Mammary epithelial cell (primary cell): ENCODE measurements at regions of chr4 and their contacts with region 1.

Region 1: DNA sequence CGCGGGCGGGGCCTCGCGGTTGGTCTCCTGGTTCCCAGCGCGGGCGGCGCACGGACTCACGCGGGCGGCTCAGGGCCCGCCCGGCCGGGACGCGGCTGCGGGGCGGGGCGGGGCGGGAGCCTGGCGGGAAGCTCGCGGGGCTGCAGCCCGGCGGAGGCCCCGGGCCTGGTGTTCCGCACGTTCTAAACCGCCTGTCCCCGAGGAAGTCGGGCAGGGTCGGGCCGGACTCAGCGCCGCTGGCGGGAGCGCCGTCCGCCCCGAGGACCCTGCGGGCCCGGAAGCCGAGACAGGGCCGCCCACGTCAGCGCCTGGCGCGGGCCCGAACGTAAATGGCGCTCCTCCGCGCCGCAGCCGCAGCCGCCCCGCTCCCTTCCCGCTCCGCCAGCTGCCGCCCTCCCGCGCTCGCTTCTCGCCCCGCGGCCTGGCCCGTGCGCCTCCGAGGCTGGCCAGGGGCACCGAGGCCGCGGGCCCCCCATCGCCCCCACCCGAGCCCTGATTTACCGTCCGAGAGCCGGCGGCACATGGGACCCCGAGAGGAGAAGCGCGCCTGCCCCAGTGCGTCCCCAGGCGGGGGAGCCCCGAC is 309 bp upstream of the CTBP1 start:
- DNase-seq: peak; percentile 81
- H3K4me3 ChIP-seq: peak overlapping the region; percentile 54 to 62 (median 55)
- H3K27ac ChIP-seq: peak overlapping the region; percentile 54
- H3K4me1 ChIP-seq: peaks cover 32% of the 10 kb centered on the region
- H3K27me3 ChIP-seq: no peaks in the 10 kb centered on the region
- CTCF ChIP-seq: no peak

Region 2: GRCh38 chr4:1011022-1011694 is 238.1 kb before region 1 on chr4 and contains the start of gene FGFRL1:
- CTCF ChIA-PET with region 1: no interaction called
- dilution Hi-C with region 1: no loop called
- in situ Hi-C with region 1: no loop called
- intact Hi-C with region 1: no loop called
- DNase-seq: peak; percentile 86
- H3K4me3 ChIP-seq: peak within 1 kb of the TSS; percentile 39 to 49 (median 47)
- H3K27ac ChIP-seq: peak within 1 kb of the TSS; percentile 39
- H3K4me1 ChIP-seq: peaks cover 20% of the 10 kb centered on the region
- H3K27me3 ChIP-seq: peaks cover 3% of the 10 kb centered on the region
- CTCF ChIP-seq: no peak
- total RNA-seq, gene FGFRL1: 12.8 to 15.0 TPM

Region 3: GRCh38 chr4:1337376-1337860 is 88.2 kb after region 1 on chr4:
- CTCF ChIA-PET with region 1: no interaction called
- dilution Hi-C with region 1: no loop called
- in situ Hi-C with region 1: loop called in 1 of 2 experiments (anchors 10 kb)
- intact Hi-C with region 1: no loop called
- DNase-seq: peak; percentile 34
- H3K4me3 ChIP-seq: no peak overlapping the region
- H3K27ac ChIP-seq: no peak overlapping the region
- H3K4me1 ChIP-seq: peaks cover 3% of the 10 kb centered on the region
- H3K27me3 ChIP-seq: no peaks in the 10 kb centered on the region
- CTCF ChIP-seq: no peak